Activated naive CD4-positive, alpha-beta T cell treated with anti-CD3 and anti-CD28 coated beads for 36 hours (primary cell): ENCODE measurements at regions of chr17 and their contacts with region 1.

Region 1: DNA sequence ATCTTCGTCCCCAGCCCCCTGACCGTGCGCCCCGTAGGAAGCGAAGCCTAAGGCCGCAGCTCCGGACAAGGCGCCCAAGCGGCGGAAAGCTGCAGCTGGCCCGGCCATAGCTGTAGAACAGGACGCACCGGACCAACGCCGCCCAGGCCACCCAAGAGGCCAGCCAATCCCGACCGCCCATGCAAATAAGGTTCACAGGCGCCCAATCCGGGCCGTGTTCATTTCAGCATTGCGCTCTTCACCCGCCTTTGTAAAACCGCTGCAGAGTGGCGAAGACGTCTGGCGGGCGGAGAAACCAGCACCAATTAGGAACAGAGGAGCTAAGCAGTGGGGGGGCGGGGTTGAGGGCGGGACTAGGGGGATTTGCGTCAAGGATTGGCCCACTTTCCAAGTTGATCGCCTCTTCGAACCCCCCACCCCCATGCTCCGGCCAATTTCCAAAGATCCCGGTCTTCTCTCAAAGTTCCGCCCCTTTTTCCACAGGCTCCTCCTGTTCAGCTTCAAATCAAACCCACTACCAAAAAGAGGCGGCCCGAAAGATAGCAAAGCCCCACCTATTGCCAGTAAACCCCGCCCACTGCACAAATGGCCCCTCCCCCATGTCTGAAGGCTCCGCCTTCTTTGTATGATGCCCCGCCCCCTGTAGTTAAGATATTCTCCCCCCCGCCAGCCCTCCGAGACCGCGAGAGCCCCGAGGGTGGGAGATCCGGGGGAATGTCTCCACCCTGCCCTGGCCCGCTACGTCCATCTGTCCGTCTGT is at the start of gene TMEM256:
- DNase-seq: peak; percentile 99
- H3K4me3 Mint-ChIP-seq: peak within 1 kb of the TSS; percentile 93
- H3K27ac Mint-ChIP-seq: peak within 1 kb of the TSS; percentile 93
- H3K4me1 Mint-ChIP-seq: peaks cover 19% of the 10 kb centered on the region
- H3K27me3 Mint-ChIP-seq: peaks cover 2% of the 10 kb centered on the region
- total RNA-seq, gene TMEM256: 65.6 to 66.3 TPM

Region 2: GRCh38 chr17:7064261-7064660 is 339.9 kb before region 1 on chr17:
- CTCF ChIA-PET with region 1: no interaction called
- intact Hi-C with region 1: no loop called
- DNase-seq: no peak
- H3K4me3 Mint-ChIP-seq: no peak overlapping the region
- H3K27ac Mint-ChIP-seq: no peak overlapping the region
- H3K4me1 Mint-ChIP-seq: peaks cover 19% of the 10 kb centered on the region
- H3K27me3 Mint-ChIP-seq: peaks cover 2% of the 10 kb centered on the region

Region 3: GRCh38 chr17:7252176-7253043 is 151.7 kb before region 1 on chr17 and contains the start of gene ELP5:
- CTCF ChIA-PET with region 1: no interaction called
- intact Hi-C with region 1: no loop called
- DNase-seq: peak; percentile 93
- H3K4me3 Mint-ChIP-seq: peak within 1 kb of the TSS; percentile 86
- H3K27ac Mint-ChIP-seq: peak within 1 kb of the TSS; percentile 99
- H3K4me1 Mint-ChIP-seq: peaks cover 34% of the 10 kb centered on the region
- H3K27me3 Mint-ChIP-seq: no peaks in the 10 kb centered on the region
- total RNA-seq, gene ELP5: 52.4 to 53.5 TPM

Region 4: DNA sequence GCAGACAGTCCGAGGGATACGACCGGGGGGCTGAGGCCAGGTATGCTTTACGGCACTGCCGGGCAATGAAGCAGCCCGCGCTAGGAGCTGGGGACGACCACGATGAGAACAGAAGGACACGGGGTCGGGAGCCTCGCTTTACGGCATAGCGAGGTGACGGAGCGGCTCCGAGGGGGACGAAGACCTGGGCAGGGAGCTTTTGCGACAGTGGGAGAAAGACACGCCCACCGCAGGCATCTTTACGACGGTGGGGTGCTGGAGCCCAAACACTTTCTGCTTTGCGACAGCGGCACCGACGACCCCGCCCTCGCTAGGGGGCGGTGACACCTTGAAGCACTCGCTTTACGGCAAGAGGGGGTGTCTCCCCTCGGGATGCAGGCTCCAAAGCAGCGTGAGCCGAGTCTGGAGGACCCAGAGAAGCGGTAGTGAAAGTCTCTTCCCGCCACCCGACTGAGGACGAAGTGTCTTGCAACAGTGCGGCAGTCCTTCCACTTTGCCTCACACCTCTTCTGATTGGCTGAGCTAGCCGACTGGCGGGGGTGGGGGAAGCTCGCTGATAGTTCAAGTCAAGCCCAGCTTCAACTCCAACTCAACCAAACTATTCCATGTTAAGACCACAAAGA is 74.7 kb before region 1 on chr17:
- CTCF ChIA-PET with region 1: no interaction called
- intact Hi-C with region 1: loop called (anchors 1 kb)
- DNase-seq: peak; percentile 98
- H3K4me3 Mint-ChIP-seq: peak overlapping the region; percentile 97
- H3K27ac Mint-ChIP-seq: peak overlapping the region; percentile 91
- H3K4me1 Mint-ChIP-seq: peaks cover 54% of the 10 kb centered on the region
- H3K27me3 Mint-ChIP-seq: no peaks in the 10 kb centered on the region

Region 5: GRCh38 chr17:7380321-7380720 is 23.8 kb before region 1 on chr17:
- CTCF ChIA-PET with region 1: no interaction called
- intact Hi-C with region 1: no loop called
- DNase-seq: no peak
- H3K4me3 Mint-ChIP-seq: no peak overlapping the region
- H3K27ac Mint-ChIP-seq: no peak overlapping the region
- H3K4me1 Mint-ChIP-seq: peaks cover 4% of the 10 kb centered on the region
- H3K27me3 Mint-ChIP-seq: peaks cover 35% of the 10 kb centered on the region

Region 6: DNA sequence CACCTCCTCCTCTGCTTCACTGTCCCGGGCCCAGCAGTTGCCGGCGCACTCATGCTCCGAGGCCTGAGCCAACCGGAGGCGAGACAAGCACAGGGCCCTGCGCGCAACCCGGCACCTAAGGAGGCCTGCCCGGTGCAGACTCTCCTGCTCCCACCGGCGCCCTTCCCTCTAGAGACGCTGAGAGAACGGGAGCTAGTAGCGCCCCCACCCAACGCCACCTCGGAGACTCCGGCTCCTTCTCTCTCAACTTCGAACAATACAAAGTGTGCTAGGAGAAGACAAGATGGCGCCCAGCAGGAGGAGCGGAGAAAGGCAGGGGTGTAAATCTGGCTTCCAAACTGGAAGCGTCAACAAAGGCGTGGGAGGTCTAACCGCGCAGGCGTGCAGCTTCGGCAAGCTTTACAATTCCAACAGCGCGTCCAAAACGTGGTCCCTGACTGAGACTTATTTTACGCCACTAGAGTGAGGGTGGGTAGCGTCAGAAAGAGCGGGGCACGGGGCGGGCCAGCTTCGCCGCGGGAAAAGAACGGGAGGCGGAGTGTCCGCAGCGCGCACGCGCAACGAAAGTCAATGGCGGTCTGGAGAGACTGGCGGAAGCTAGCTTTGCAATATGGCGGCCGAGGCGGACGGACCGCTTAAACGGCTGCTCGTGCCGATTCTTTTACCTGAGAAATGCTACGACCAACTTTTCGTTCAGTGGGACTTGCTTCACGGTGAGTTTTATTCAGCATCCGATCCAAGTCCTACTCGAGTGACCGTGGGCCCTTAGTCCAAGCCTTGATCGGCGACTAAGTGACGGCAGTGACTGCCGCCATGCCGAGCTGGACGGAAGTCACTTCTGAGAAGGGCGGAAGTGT is 179.3 kb after region 1 on chr17 and contains the start of gene MPDU1:
- CTCF ChIA-PET with region 1: no interaction called
- intact Hi-C with region 1: loop called (anchors 1 kb)
- DNase-seq: peak; percentile 96
- H3K4me3 Mint-ChIP-seq: peak within 1 kb of the TSS; percentile 95
- H3K27ac Mint-ChIP-seq: peak within 1 kb of the TSS; percentile 100
- H3K4me1 Mint-ChIP-seq: peaks cover 58% of the 10 kb centered on the region
- H3K27me3 Mint-ChIP-seq: no peaks in the 10 kb centered on the region
- total RNA-seq, gene MPDU1: 48.8 to 53.5 TPM